Activated naive CD4-positive, alpha-beta T cell treated with anti-CD3 and anti-CD28 coated beads for 36 hours (primary cell): ENCODE measurements at regions of chr3 and their contacts with region 1.

Region 1: DNA sequence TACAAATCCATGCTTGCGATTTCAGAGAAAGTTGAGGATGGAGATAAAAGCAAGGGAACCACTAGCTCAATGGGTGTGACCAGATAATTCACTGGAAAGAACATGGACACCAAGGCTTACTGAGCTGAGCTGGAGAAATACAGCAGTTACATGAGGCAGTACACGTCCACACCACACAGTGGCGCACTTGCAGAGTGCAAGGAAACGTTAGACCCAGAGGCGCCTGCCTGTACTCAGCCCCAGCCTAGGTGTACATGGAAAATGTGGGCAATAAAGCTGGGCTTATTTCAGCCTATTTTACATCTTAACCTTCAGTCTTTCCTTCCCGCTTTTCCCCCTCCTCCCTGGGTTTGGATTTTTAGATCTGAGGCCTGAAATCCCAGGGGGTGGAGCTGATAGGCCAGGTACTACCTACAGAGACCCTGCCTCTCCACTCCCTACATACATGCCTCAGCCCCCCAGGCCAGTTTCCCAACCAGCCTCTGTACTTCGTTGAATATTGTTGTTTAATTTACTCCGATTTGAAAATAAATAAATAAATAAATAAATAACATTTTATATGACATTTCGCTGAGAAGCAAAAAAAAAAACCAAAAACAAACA is 60.1 kb downstream of the PCOLCE2 start:
- DNase-seq: peak; percentile 87
- H3K4me3 Mint-ChIP-seq: no peak overlapping the region
- H3K27ac Mint-ChIP-seq: no peak overlapping the region
- H3K4me1 Mint-ChIP-seq: no peaks in the 10 kb centered on the region
- H3K27me3 Mint-ChIP-seq: peaks cover 3% of the 10 kb centered on the region

Region 2: GRCh38 chr3:142808103-142808917 is 20.5 kb before region 1 on chr3:
- CTCF ChIA-PET with region 1: interaction called, 15 read pairs
- intact Hi-C with region 1: no loop called
- DNase-seq: peak; percentile 20
- H3K4me3 Mint-ChIP-seq: no peak overlapping the region
- H3K27ac Mint-ChIP-seq: no peak overlapping the region
- H3K4me1 Mint-ChIP-seq: no peaks in the 10 kb centered on the region
- H3K27me3 Mint-ChIP-seq: peaks cover 6% of the 10 kb centered on the region

Region 3: GRCh38 chr3:142844339-142844977 is 15.7 kb after region 1 on chr3:
- CTCF ChIA-PET with region 1: interaction called, 11 read pairs
- intact Hi-C with region 1: no loop called
- DNase-seq: no peak
- H3K4me3 Mint-ChIP-seq: no peak overlapping the region
- H3K27ac Mint-ChIP-seq: no peak overlapping the region
- H3K4me1 Mint-ChIP-seq: peaks cover 2% of the 10 kb centered on the region
- H3K27me3 Mint-ChIP-seq: peaks cover 7% of the 10 kb centered on the region

Region 4: DNA sequence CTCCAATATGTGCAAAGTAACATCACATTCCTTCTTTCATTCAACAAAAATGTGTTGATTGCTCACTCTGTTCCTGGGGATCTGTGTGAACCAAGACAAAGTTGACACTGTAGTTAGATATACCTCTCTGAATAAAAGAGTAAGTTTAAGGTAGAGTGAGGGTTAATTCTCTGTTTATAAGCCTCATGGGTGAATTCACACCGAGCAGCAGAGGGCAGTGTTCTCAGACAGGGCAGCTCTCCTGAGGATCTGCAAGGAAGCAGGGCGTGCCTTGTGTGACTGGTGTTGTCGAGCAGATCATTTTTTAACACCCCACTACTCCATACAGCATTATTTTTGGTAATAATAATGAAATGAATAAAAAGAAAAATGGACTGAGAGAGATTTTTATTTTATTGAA is 100.3 kb after region 1 on chr3:
- CTCF ChIA-PET with region 1: interaction called, 12 read pairs
- intact Hi-C with region 1: no loop called
- DNase-seq: peak; percentile 65
- H3K4me3 Mint-ChIP-seq: no peak overlapping the region
- H3K27ac Mint-ChIP-seq: no peak overlapping the region
- H3K4me1 Mint-ChIP-seq: no peaks in the 10 kb centered on the region
- H3K27me3 Mint-ChIP-seq: peaks cover 13% of the 10 kb centered on the region

Region 5: DNA sequence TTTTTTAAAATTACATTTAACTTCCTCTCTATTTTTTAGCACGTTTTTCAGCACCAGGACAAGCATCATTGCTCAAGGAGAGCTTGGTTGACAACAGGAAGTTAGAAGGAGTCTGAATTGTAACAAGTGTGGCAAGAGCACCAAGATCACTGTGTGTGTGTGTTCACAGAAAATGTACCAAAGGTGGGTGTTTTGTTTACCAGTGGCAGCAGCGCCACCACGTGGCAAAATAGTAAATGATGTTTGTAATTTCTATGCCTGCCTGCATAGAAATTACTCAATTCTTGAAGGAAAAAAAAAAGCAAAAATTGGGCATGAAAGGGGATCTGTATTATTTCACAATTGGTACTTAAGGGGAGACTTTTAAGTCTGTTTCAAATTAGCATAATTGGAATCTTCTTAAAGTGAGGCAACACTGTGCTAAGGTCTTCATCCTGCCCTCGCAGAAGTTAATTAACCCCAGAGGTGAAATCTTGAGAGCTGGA is 165.2 kb after region 1 on chr3:
- CTCF ChIA-PET with region 1: interaction called, 33 read pairs
- intact Hi-C with region 1: loop called (anchors 1 kb)
- DNase-seq: peak; percentile 77
- H3K4me3 Mint-ChIP-seq: no peak overlapping the region
- H3K27ac Mint-ChIP-seq: no peak overlapping the region
- H3K4me1 Mint-ChIP-seq: no peaks in the 10 kb centered on the region
- H3K27me3 Mint-ChIP-seq: peaks cover 4% of the 10 kb centered on the region